GM12878 (cell line): ENCODE measurements at regions of chr4 and their contacts with region 1.

Region 1: GRCh38 chr4:78951862-78952472 is 12.7 kb upstream of the PAQR3 start:
- DNase-seq: no peak
- ATAC-seq: peak; percentile 88
- H3K4me3 ChIP-seq: no peak overlapping the region
- H3K27ac ChIP-seq: no peak overlapping the region
- H3K4me1 ChIP-seq: no peaks in the 10 kb centered on the region
- H3K27me3 ChIP-seq: no peaks in the 10 kb centered on the region
- CTCF ChIP-seq: peak; percentile 54 to 84 (median 62)
- EP300 ChIP-seq: no peak
- POLR2A ChIP-seq: no peak
- RAD21 ChIP-seq: peak; percentile 89

Region 2: DNA sequence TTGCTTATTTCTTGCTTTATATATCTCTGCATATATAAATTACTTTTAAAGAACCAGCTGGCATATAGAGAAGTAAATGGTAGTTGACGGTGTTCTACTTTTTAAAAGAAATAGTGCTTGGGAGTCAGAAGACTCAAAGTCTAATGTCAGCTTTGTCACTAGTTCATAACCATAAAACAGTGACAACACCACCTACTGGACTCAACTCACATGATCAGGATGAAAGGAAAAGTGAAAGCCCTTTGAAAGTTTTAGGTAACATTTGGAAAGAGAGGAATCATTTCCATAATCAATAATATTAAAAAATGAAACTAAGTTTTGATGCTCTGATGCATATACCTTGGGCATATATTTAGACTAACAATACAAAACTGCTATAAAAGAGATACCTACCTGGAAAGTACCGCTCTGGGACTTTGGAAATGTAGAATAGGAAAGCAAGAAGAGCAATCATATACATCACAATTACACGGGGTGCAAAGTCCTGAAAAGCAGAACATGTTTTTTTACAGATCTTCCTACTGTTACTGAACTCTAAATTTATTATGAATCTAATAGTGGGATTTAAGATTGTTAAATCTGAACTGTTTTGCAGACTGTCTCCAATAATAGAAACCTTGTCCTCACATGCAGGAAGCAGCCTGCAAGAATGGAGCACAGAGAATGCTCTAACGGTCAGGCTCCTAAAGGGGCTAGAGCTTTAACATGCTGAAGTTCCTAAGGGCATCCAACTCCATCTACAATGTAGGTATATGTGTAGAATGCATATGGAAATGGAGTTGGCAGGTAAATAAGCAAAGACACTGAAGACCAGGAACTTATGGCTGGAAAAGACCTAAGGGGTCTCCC is 28.3 kb before region 1 on chr4:
- CTCF ChIA-PET with region 1: interaction called, 10 read pairs
- POLR2A ChIA-PET with region 1: no interaction called
- RAD21 ChIA-PET with region 1: no interaction called
- SMC1A ChIA-PET with region 1: interaction called, 3 read pairs
- in situ Hi-C with region 1: no loop called
- intact Hi-C with region 1: no loop called
- DNase-seq: no peak
- ATAC-seq: peak; percentile 59; the same call in 2 of the 3 replicates
- H3K4me3 ChIP-seq: no peak overlapping the region
- H3K27ac ChIP-seq: no peak overlapping the region
- H3K4me1 ChIP-seq: no peaks in the 10 kb centered on the region
- H3K27me3 ChIP-seq: no peaks in the 10 kb centered on the region
- CTCF ChIP-seq: peak; percentile 5 to 21 (median 12); a peak in 1 of 6 replicates
- EP300 ChIP-seq: no peak
- POLR2A ChIP-seq: no peak
- RAD21 ChIP-seq: peak; percentile 37; the same call in 1 of the 2 replicates

Region 3: DNA sequence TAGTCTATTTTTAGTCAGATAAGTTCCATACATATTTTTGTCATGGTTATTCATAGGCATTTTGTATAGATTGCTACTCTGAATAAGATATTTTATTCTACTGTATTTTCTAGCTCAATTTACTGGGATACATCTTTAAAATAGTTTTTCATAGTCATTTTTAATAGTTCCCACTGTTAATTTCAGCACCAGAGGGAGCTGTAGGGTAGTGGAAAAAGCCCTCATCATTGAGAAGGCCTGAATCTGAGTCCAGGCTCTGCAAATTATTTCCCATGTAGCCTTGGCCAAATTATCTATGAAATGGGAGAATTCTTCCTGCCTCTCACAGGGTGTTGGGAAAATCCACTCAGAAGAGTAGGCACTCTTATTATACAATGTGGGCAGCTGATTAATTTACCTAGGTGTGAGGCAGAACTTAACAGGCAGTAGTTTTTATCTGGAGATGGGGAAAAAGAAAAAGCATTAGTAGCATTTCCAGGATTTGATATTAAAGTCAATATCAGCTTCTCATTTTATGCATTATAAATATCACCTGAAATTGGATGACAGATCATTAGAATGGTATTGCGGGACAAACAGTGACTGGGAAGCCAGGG is 90.2 kb after region 1 on chr4:
- CTCF ChIA-PET with region 1: interaction called, 23 read pairs
- POLR2A ChIA-PET with region 1: no interaction called
- RAD21 ChIA-PET with region 1: interaction called, 4 read pairs
- SMC1A ChIA-PET with region 1: interaction called, 21 read pairs
- in situ Hi-C with region 1: no loop called
- intact Hi-C with region 1: loop called (anchors 5 kb)
- DNase-seq: no peak
- ATAC-seq: peak; percentile 67
- H3K4me3 ChIP-seq: no peak overlapping the region
- H3K27ac ChIP-seq: no peak overlapping the region
- H3K4me1 ChIP-seq: no peaks in the 10 kb centered on the region
- H3K27me3 ChIP-seq: no peaks in the 10 kb centered on the region
- CTCF ChIP-seq: peak; percentile 38 to 62 (median 43); a peak in 4 of 6 replicates
- EP300 ChIP-seq: no peak
- POLR2A ChIP-seq: no peak
- RAD21 ChIP-seq: peak; percentile 84

Region 4: DNA sequence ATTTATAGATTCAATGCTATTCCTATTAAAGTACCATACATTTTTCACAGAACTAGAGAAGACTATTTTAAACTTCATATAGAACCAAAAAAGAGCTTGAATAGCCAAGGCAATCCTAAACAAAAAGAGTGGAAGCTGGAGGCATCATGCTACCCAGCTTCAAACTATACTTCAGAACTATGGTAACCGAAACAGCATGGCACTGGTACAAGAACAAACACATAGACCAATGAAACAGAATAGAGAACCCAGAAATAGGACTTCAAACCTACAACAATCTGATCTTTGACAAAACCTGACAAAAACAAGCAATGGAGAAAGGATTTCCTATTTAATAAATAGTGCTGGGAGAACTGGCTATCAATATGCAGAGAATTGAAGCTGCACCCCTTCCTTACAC is 121.5 kb after region 1 on chr4:
- CTCF ChIA-PET with region 1: no interaction called
- POLR2A ChIA-PET with region 1: no interaction called
- RAD21 ChIA-PET with region 1: no interaction called
- SMC1A ChIA-PET with region 1: no interaction called
- in situ Hi-C with region 1: no loop called
- intact Hi-C with region 1: no loop called
- DNase-seq: no peak
- ATAC-seq: no peak
- H3K4me3 ChIP-seq: no peak overlapping the region
- H3K27ac ChIP-seq: no peak overlapping the region
- H3K4me1 ChIP-seq: no peaks in the 10 kb centered on the region
- H3K27me3 ChIP-seq: no peaks in the 10 kb centered on the region
- CTCF ChIP-seq: no peak
- EP300 ChIP-seq: no peak
- POLR2A ChIP-seq: no peak
- RAD21 ChIP-seq: no peak

Region 5: GRCh38 chr4:79232540-79232939 is 280.6 kb after region 1 on chr4:
- CTCF ChIA-PET with region 1: interaction called, 5 read pairs
- POLR2A ChIA-PET with region 1: no interaction called
- RAD21 ChIA-PET with region 1: no interaction called
- SMC1A ChIA-PET with region 1: interaction called, 4 read pairs
- in situ Hi-C with region 1: no loop called
- intact Hi-C with region 1: loop called (anchors 10 kb)
- DNase-seq: no peak
- ATAC-seq: no peak
- H3K4me3 ChIP-seq: no peak overlapping the region
- H3K27ac ChIP-seq: no peak overlapping the region
- H3K4me1 ChIP-seq: no peaks in the 10 kb centered on the region; the same call in 1 of the 2 replicates
- H3K27me3 ChIP-seq: no peaks in the 10 kb centered on the region
- CTCF ChIP-seq: no peak
- EP300 ChIP-seq: no peak
- POLR2A ChIP-seq: no peak
- RAD21 ChIP-seq: no peak

Region 6: DNA sequence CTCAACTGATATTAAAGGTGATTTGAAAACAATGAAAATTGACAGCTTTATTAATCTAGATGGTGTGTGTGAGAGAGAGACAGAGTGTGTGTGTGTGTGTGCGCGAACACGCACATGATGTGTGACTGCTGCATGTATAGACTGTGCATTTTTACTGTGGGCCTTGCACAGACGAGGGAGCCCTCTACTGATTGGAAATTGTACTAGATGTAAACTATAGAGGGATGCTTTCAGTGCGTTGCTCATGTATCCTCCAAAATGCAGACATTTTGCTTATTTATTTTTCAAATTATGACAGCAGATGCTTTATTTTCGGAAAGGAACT is 624.4 kb after region 1 on chr4:
- CTCF ChIA-PET with region 1: interaction called, 28 read pairs
- POLR2A ChIA-PET with region 1: no interaction called
- RAD21 ChIA-PET with region 1: interaction called, 7 read pairs
- SMC1A ChIA-PET with region 1: interaction called, 20 read pairs
- in situ Hi-C with region 1: loop called (anchors 10 kb)
- intact Hi-C with region 1: loop called (anchors 5 kb)
- DNase-seq: no peak
- ATAC-seq: peak; percentile 88
- H3K4me3 ChIP-seq: no peak overlapping the region
- H3K27ac ChIP-seq: no peak overlapping the region
- H3K4me1 ChIP-seq: no peaks in the 10 kb centered on the region
- H3K27me3 ChIP-seq: no peaks in the 10 kb centered on the region
- CTCF ChIP-seq: peak; percentile 37 to 50 (median 49); a peak in 4 of 6 replicates
- EP300 ChIP-seq: no peak
- POLR2A ChIP-seq: no peak
- RAD21 ChIP-seq: peak; percentile 70

Region 7: GRCh38 chr4:79865201-79865597 is 913.2 kb after region 1 on chr4:
- CTCF ChIA-PET with region 1: no interaction called
- POLR2A ChIA-PET with region 1: no interaction called
- RAD21 ChIA-PET with region 1: no interaction called
- SMC1A ChIA-PET with region 1: no interaction called
- in situ Hi-C with region 1: no loop called
- intact Hi-C with region 1: no loop called
- DNase-seq: no peak
- ATAC-seq: no peak
- H3K4me3 ChIP-seq: no peak overlapping the region
- H3K27ac ChIP-seq: no peak overlapping the region
- H3K4me1 ChIP-seq: no peaks in the 10 kb centered on the region
- H3K27me3 ChIP-seq: no peaks in the 10 kb centered on the region
- CTCF ChIP-seq: no peak
- EP300 ChIP-seq: no peak
- POLR2A ChIP-seq: no peak
- RAD21 ChIP-seq: no peak

Region 8: DNA sequence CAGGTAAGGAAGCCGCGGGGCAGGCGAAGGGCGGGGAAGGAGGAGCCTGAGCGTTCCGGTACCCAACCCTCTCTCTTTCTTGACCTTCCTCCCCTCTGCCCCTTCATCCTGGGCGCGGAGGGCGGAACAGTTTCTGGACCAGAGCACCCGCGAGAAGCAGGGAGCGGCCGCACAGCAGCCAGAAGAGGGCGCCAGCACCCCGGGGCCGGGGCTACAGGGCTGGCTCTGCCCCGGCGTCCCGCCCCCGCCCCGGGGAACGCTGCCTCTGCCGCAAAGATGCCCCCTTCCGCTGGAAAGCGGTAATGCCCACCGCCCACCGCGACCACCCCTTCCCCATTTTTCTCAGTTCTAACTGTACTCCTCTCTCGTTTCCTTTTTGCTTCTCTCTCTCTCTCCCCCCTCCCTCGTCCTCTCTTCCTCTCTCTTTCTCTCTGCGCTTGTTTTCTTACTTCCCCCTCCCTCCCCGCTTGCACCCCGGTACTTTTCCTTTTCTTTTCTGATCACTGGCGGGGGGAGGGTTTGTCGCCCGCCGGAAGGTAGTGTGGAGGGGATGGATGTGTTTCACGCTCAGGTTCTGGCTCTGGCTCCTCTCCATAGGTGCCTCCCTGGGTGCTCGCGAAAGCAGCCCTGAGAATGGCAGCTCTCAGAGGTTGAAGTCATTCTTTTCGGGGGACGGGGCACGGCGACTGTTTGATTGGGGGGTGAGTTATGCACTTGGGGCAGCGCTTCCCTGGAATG is 1232.3 kb after region 1 on chr4:
- CTCF ChIA-PET with region 1: interaction called, 15 read pairs
- POLR2A ChIA-PET with region 1: no interaction called
- RAD21 ChIA-PET with region 1: interaction called, 3 read pairs
- SMC1A ChIA-PET with region 1: interaction called, 5 read pairs
- in situ Hi-C with region 1: no loop called
- intact Hi-C with region 1: no loop called
- DNase-seq: no peak
- ATAC-seq: peak; percentile 98
- H3K4me3 ChIP-seq: peak overlapping the region; percentile 87
- H3K27ac ChIP-seq: no peak overlapping the region
- H3K4me1 ChIP-seq: peaks cover 8% of the 10 kb centered on the region
- H3K27me3 ChIP-seq: peaks cover 8 to 10% of the 10 kb centered on the region in 2 experiments
- CTCF ChIP-seq: peak; percentile 85 to 87 (median 86)
- EP300 ChIP-seq: no peak
- POLR2A ChIP-seq: no peak
- RAD21 ChIP-seq: peak; percentile 64

Region 9: DNA sequence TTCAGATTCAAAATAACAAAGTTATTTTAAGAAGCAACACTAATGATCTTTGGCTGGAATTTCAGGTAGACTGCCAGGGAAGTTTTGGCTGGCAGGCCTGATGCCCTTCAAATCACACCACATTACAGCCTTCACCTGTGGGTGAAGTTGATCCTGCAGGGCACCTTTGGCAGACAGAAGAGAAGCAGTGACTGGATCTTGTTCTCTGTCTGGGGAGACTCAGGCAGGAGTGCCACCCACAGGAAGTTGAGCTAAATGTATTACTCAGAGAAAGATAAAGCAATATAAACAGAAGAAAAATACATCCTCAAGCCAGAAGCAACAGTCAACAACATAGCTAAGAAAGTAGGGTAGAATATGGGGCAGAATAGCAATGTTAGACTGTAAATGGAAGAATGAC is 1370.7 kb after region 1 on chr4:
- CTCF ChIA-PET with region 1: no interaction called
- POLR2A ChIA-PET with region 1: no interaction called
- RAD21 ChIA-PET with region 1: no interaction called
- SMC1A ChIA-PET with region 1: no interaction called
- in situ Hi-C with region 1: no loop called
- intact Hi-C with region 1: loop called (anchors 10 kb)
- DNase-seq: no peak
- ATAC-seq: peak; percentile 76
- H3K4me3 ChIP-seq: no peak overlapping the region
- H3K27ac ChIP-seq: no peak overlapping the region
- H3K4me1 ChIP-seq: no peaks in the 10 kb centered on the region
- H3K27me3 ChIP-seq: no peaks in the 10 kb centered on the region
- CTCF ChIP-seq: peak in 2 of 3 experiments; percentile 15 to 47; a peak in 1 of 6 replicates
- EP300 ChIP-seq: no peak
- POLR2A ChIP-seq: no peak
- RAD21 ChIP-seq: peak; percentile 48; the same call in 1 of the 2 replicates